T-cell (primary cell): ENCODE measurements at regions of chr3 and their contacts with region 1.

Region 1: DNA sequence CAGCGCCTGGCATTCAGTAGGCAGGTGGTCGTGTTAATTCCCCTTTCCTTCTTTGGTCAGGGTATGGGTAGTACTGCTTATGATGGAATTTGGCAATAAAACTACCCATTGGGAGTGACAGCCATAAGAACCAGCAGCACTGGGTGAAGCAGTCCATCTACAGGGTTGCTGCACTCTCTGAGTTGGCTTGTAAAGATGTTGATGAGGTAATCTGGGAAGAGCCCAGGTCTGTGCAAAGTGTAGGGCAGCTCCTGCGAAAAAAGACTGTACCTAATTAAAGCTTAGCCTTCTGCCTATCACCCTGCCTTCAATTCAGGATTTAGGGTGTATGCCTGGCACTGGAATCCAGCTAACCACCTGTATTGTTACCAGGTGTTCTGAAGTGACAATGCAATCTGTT is 4.7 kb upstream of the FETUB start:
- DNase-seq: no peak
- ATAC-seq: no peak
- H3K4me3 ChIP-seq: no peak overlapping the region
- H3K4me3 Mint-ChIP-seq: no peak overlapping the region
- H3K27ac ChIP-seq: no peak overlapping the region
- H3K27ac Mint-ChIP-seq: no peak overlapping the region
- H3K4me1 ChIP-seq: no peaks in the 10 kb centered on the region
- H3K4me1 Mint-ChIP-seq: no peaks in the 10 kb centered on the region
- H3K27me3 ChIP-seq: peaks cover 0 to 9% of the 10 kb centered on the region in 2 experiments
- H3K27me3 Mint-ChIP-seq: peaks cover 15 to 27% of the 10 kb centered on the region in 2 donors

Region 2: GRCh38 chr3:187093320-187093719 is 457.8 kb after region 1 on chr3:
- CTCF ChIA-PET with region 1: no interaction called
- POLR2A ChIA-PET with region 1: interaction called in 1 of 2 experiments, 10 read pairs
- DNase-seq: no peak
- ATAC-seq: no peak
- H3K4me3 ChIP-seq: no peak overlapping the region
- H3K4me3 Mint-ChIP-seq: no peak overlapping the region
- H3K27ac ChIP-seq: no peak overlapping the region
- H3K27ac Mint-ChIP-seq: no peak overlapping the region
- H3K4me1 ChIP-seq: no peaks in the 10 kb centered on the region
- H3K4me1 Mint-ChIP-seq: peaks cover 0 to 12% (median 0%) of the 10 kb centered on the region in 3 donors
- H3K27me3 ChIP-seq: no peaks in the 10 kb centered on the region
- H3K27me3 Mint-ChIP-seq: no peaks in the 10 kb centered on the region